ENCODE measurements at regions of chr2 and their contacts with region 1.

Region 1: GRCh38 chr2:215283221-215283620 is 28.6 kb upstream of the ATIC start:
- DNase-seq: no peak
- ATAC-seq: no peak
- H3K4me3 ChIP-seq: no peak overlapping the region
- H3K27ac ChIP-seq: no peak overlapping the region
- H3K4me1 ChIP-seq: no peaks in the 10 kb centered on the region
- H3K27me3 ChIP-seq: no peaks in the 10 kb centered on the region
- CTCF ChIP-seq: no peak

Region 2: DNA sequence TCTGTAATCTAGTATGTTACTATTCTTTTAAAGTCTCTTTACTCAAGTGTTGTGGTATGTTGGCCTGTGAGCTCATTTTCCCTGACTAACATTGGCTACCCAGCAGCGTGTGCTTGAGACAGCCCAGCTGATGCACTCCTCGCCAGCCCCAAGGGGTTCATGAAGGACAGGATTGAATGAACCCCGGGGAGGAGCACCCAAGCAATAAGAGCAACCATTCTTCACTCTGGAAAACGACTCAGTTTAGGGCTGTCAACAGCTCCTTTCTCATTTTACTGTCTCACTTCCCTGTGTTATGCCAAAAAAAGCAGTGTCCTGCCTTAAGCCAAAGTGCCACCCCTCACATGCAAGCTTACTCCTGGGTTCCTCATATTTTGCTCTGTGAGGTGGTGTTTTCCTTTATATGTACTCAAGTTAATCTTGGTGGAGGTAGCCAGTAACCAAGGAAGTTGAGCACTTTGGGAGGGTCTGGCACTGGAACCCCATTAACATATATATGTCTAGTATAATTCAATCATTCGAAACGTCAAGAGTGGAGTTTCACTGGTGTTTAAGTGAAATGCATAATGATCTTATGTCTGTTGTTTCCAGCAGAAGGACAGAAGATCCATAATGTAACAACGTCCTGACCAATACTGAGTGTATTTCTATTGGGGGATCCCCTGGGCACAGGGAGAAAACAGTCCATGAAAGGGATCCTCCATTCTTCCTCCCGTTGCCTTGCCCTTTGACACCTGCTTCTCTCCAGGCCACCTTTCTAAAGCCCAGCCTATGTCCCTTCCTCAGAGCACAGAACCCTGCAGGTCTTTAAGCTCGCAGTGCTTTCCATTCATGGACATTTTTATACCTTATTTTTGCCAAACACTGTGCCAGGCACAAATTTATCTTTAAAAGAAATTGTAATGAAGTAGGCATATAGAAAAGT is 71.8 kb after region 1 on chr2:
- CTCF ChIA-PET with region 1: interaction called, 11 read pairs
- POLR2A ChIA-PET with region 1: no interaction called
- in situ Hi-C with region 1: no loop called
- intact Hi-C with region 1: no loop called
- DNase-seq: no peak
- ATAC-seq: no peak
- H3K4me3 ChIP-seq: no peak overlapping the region
- H3K27ac ChIP-seq: no peak overlapping the region
- H3K4me1 ChIP-seq: no peaks in the 10 kb centered on the region
- H3K27me3 ChIP-seq: no peaks in the 10 kb centered on the region
- CTCF ChIP-seq: no peak